ENCODE measurements at regions of chr15 and their contacts with region 1.

Region 1: GRCh38 chr15:33007303-33007855 is 187.1 kb downstream of the FMN1 start:
- DNase-seq: peak; percentile 31 to 67
- ATAC-seq: peak; percentile 94 to 96
- H3K4me3 ChIP-seq: no peak overlapping the region
- H3K27ac ChIP-seq: no peak overlapping the region
- H3K4me1 ChIP-seq: peaks cover 3% of the 10 kb centered on the region; the same call in 1 of the 3 replicates
- CTCF ChIP-seq: peak; percentile 48; the same call in 2 of the 3 replicates
- EP300 ChIP-seq: no peak
- POLR2A ChIP-seq: no peak
- RAD21 ChIP-seq: peak in 1 of 2 experiments; percentile 39; a peak in 2 of 5 replicates

Region 2: DNA sequence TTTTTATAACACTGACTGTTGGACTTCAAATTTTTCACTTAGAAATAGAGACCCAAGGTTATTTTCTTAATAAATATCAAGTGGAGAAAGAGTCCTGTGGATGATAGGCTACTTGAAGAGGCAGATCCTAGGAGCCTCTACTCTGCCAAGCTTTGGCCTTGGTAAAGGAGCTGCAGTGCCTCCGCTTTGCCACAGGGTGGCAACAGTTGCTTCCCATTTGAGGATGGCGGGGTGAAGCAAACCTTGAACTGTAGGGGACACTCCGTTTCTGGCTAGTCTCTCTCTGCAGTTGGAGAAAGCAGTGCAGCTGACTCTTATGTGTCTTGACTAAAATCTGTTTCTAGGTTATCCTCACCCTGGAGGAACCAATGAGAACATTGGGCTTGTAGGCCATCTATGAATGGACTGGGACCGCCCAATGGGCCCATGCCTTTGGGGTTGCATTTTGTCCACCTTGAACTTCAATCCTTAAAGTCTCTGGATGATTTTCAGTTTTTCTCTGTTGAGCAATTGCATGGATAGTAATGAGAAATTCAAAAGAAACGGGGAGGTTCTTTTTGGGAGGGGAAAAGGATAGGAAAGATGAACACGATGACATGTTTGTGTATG is 356.0 kb before region 1 on chr15:
- CTCF ChIA-PET with region 1: interaction called, 11 read pairs
- POLR2A ChIA-PET with region 1: no interaction called
- DNase-seq: peak; percentile 76 to 80
- ATAC-seq: peak; percentile 92 to 96
- H3K4me3 ChIP-seq: no peak overlapping the region
- H3K27ac ChIP-seq: peak overlapping the region in 1 of 2 experiments; percentile 9; a peak in 2 of 6 replicates
- H3K4me1 ChIP-seq: peaks cover 7% of the 10 kb centered on the region; the same call in 1 of the 3 replicates
- CTCF ChIP-seq: peak; percentile 88
- EP300 ChIP-seq: no peak
- POLR2A ChIP-seq: no peak
- RAD21 ChIP-seq: peak; percentile 88 to 92

Region 3: GRCh38 chr15:33029109-33029652 is 21.8 kb after region 1 on chr15:
- CTCF ChIA-PET with region 1: no interaction called
- POLR2A ChIA-PET with region 1: no interaction called
- DNase-seq: no peak
- ATAC-seq: no peak
- H3K4me3 ChIP-seq: no peak overlapping the region
- H3K27ac ChIP-seq: no peak overlapping the region
- H3K4me1 ChIP-seq: no peaks in the 10 kb centered on the region
- CTCF ChIP-seq: no peak
- EP300 ChIP-seq: no peak
- POLR2A ChIP-seq: no peak
- RAD21 ChIP-seq: no peak